A673 (cell line): ENCODE measurements at regions of chr1 and their contacts with region 1.

Region 1: DNA sequence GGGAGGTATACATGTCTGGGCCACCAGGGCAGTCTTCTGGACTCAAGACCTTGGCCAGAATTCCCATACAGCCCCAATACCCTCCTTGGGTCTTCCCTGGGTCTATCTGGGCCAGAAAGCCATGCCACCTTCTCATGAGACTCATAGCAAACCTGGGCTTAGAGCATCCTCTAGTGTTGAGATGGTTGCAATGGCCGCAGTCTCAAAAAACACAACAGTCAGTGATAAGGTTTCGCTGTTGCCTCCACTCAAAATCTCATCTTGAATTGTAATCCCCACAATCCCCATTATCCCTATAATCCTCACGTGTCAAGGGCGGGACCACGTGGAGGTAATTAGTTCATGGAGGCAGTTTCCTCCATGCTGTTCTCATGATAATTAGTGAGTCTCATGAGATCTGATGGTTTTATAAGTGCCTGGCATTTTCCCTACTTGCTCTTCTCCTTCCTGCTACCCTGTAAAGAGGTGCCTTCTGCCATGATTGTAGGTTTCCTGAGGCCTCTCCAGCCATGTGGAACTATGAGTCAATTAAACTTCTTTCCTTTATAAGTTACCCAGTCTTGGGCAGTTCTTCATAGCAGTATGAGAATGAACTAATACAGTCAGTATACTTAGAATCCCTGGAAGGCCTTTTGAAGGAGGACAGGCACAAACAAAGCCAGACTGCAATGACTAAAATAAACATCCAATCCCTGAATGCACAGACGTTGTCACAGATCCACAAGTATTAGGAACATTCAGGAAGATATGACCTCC is 77.0 kb downstream of the CTH start:
- DNase-seq: peak; percentile 82
- H3K4me3 ChIP-seq: no peak overlapping the region
- H3K27ac ChIP-seq: no peak overlapping the region
- H3K4me1 ChIP-seq: peaks cover 13% of the 10 kb centered on the region
- H3K27me3 ChIP-seq: no peaks in the 10 kb centered on the region
- CTCF ChIP-seq: peak; percentile 93

Region 2: GRCh38 chr1:70134148-70134547 is 353.9 kb before region 1 on chr1:
- CTCF ChIA-PET with region 1: no interaction called
- POLR2A ChIA-PET with region 1: no interaction called
- intact Hi-C with region 1: loop called (anchors 2 kb)
- DNase-seq: no peak
- H3K4me3 ChIP-seq: no peak overlapping the region
- H3K27ac ChIP-seq: no peak overlapping the region
- H3K4me1 ChIP-seq: no peaks in the 10 kb centered on the region
- H3K27me3 ChIP-seq: no peaks in the 10 kb centered on the region
- CTCF ChIP-seq: no peak

Region 3: DNA sequence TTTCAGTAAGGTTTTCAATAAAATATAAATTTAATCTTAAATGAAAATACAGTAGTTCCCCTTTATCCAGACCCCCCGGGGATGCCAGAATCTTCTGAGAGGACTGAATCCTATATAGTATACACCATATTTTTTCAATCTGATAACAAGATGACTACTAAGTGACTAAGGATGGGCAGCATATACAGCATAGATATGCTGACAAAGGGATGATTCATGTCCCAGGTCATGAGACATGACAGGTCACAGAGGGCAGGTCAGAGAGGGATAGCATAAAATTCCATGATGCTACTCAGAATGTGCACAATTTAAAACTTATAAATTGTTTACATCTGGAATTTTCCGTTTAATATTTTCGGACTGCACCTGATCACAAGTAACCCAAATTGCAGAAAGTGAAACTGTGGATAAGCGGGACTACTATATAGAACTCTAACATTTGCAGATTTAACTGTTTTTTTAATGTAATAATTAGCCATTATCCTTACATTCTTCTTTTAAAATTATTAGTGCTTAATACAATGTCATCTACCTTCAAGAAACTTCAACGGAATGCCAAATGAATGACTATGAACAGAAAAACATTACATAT is 331.5 kb before region 1 on chr1:
- CTCF ChIA-PET with region 1: no interaction called
- POLR2A ChIA-PET with region 1: no interaction called
- intact Hi-C with region 1: no loop called
- DNase-seq: no peak
- H3K4me3 ChIP-seq: no peak overlapping the region
- H3K27ac ChIP-seq: no peak overlapping the region
- H3K4me1 ChIP-seq: no peaks in the 10 kb centered on the region
- H3K27me3 ChIP-seq: no peaks in the 10 kb centered on the region
- CTCF ChIP-seq: no peak

Region 4: GRCh38 chr1:70256664-70257063 is 231.4 kb before region 1 on chr1:
- CTCF ChIA-PET with region 1: no interaction called
- POLR2A ChIA-PET with region 1: no interaction called
- intact Hi-C with region 1: loop called (anchors 10 kb)
- DNase-seq: no peak
- H3K4me3 ChIP-seq: no peak overlapping the region
- H3K27ac ChIP-seq: no peak overlapping the region
- H3K4me1 ChIP-seq: no peaks in the 10 kb centered on the region
- H3K27me3 ChIP-seq: no peaks in the 10 kb centered on the region
- CTCF ChIP-seq: no peak

Region 5: DNA sequence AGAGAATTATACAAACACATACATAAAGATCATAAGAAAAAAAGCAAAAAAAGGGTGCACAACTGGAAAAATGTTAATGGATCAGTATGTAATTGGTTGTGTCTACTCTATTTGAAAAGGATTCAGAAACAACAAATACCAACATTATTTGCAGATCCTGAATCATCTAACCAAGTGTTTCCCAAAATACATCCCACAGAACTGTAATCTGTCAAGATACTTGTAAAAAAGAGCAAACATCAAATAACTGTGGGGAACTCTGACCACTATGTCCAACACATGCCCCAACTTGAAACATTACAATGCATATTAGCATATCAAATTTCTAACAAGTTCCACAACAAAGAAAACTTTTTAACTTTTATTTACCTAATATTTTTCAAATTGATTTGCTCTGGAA is 156.1 kb before region 1 on chr1:
- CTCF ChIA-PET with region 1: no interaction called
- POLR2A ChIA-PET with region 1: no interaction called
- intact Hi-C with region 1: no loop called
- DNase-seq: no peak
- H3K4me3 ChIP-seq: no peak overlapping the region
- H3K27ac ChIP-seq: no peak overlapping the region
- H3K4me1 ChIP-seq: no peaks in the 10 kb centered on the region
- H3K27me3 ChIP-seq: no peaks in the 10 kb centered on the region
- CTCF ChIP-seq: no peak

Region 6: DNA sequence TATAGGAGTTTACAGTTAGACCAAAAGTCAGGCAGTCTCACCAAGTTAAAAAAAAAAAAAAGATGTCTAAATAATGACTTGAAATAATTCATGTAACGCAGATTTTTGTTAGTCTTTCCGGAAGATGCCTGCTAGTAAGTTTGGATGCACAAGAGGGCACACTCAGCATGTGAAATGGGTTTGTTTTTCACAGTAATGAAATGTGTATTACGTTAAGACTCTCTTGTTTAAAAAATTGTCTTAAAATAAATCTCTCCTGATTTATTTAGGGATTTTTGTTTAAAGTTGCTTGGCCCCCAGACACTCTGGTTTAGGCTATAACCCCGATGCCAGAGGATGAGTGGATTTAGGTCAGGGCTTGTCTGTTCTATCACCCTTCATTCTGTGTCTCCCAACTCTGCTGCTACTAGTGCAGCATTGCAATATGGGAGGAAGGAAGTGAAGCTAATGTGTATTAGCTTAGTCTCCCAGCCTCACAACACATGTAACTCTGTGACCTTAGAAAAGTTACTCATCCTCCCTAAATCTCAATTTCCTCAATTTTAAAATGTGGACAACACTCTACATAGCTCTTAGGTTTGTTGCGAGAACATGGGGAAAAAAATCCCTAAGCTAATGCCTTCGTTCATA is 51.4 kb before region 1 on chr1:
- CTCF ChIA-PET with region 1: interaction called, 3 read pairs
- POLR2A ChIA-PET with region 1: interaction called, 3 read pairs
- intact Hi-C with region 1: loop called (anchors 1 kb)
- DNase-seq: peak; percentile 64
- H3K4me3 ChIP-seq: no peak overlapping the region
- H3K27ac ChIP-seq: no peak overlapping the region
- H3K4me1 ChIP-seq: peaks cover 9% of the 10 kb centered on the region
- H3K27me3 ChIP-seq: no peaks in the 10 kb centered on the region
- CTCF ChIP-seq: peak; percentile 66

Region 7: GRCh38 chr1:70459496-70460225 is 28.4 kb before region 1 on chr1:
- CTCF ChIA-PET with region 1: no interaction called
- POLR2A ChIA-PET with region 1: no interaction called
- intact Hi-C with region 1: loop called (anchors 2 kb)
- DNase-seq: peak; percentile 32
- H3K4me3 ChIP-seq: no peak overlapping the region
- H3K27ac ChIP-seq: no peak overlapping the region
- H3K4me1 ChIP-seq: peaks cover 18% of the 10 kb centered on the region
- H3K27me3 ChIP-seq: no peaks in the 10 kb centered on the region
- CTCF ChIP-seq: no peak

Region 8: DNA sequence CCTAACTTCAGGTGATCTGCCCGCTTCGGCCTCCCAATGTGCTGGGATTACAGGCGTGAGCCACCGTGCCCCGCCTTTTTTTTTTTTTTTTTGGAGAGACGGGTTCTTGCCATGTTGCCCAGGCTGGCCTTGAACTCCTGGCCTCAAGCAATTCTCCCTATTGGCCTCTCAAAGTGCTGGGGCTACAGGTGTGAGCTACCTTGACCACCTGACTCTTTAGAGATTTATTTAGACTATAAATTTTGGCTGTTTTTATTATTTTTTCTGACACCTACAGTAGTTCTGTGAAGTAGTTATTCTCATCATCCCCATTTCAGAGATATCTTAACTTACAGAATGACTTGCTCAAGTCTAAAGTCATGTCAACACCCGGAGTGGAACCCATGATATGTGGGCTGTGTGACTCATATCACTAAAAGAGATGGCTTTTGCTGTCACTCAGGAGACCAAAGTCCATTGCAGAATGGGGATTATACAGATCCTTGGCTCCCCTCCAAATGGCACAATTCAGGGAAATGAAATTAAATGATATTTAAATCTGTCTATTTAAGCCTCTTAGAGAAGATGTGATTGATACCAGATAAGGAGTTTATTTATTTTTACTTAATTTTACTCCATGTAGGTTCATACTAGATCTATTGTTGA is 16.2 kb after region 1 on chr1:
- CTCF ChIA-PET with region 1: interaction called, 11 read pairs
- POLR2A ChIA-PET with region 1: no interaction called
- intact Hi-C with region 1: no loop called
- DNase-seq: peak; percentile 83
- H3K4me3 ChIP-seq: no peak overlapping the region
- H3K27ac ChIP-seq: no peak overlapping the region
- H3K4me1 ChIP-seq: peaks cover 9% of the 10 kb centered on the region
- H3K27me3 ChIP-seq: no peaks in the 10 kb centered on the region
- CTCF ChIP-seq: no peak